Activated CD4-positive, alpha-beta T cell treated with anti-CD3 and anti-CD28 coated beads for 36 hours (primary cell): ENCODE measurements at regions of chr13 and their contacts with region 1.

Region 1: GRCh38 chr13:94210816-94211215 is 268.7 kb downstream of the DCT start:
- DNase-seq: peak; percentile 12
- ATAC-seq: peak; percentile 65
- H3K4me3 Mint-ChIP-seq: no peak overlapping the region
- H3K27ac Mint-ChIP-seq: no peak overlapping the region
- H3K4me1 Mint-ChIP-seq: peaks cover 3% of the 10 kb centered on the region
- H3K27me3 Mint-ChIP-seq: no peaks in the 10 kb centered on the region

Region 2: DNA sequence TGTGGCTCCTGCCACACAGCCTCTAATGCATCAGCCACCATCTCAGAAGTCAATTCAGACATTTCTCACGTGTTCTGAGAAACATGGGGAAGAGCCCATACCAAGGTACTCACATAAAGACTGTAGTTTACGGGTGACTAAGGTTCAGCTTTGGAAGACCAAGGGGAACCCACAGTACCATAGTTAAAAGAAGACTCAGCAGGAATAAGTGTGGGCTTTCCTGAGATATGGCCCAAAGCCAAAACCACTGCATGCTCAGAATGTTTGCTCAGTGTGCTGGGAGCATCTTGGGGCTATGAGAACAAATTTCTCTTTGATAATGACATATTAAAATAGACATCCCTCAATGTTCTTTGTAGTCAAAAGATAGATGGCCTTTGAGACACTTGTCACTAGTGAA is 15.1 kb before region 1 on chr13:
- CTCF ChIA-PET with region 1: no interaction called
- POLR2A ChIA-PET with region 1: no interaction called
- intact Hi-C with region 1: no loop called
- DNase-seq: no peak
- ATAC-seq: no peak
- H3K4me3 Mint-ChIP-seq: no peak overlapping the region
- H3K27ac Mint-ChIP-seq: no peak overlapping the region
- H3K4me1 Mint-ChIP-seq: no peaks in the 10 kb centered on the region
- H3K27me3 Mint-ChIP-seq: no peaks in the 10 kb centered on the region

Region 3: GRCh38 chr13:94233401-94233800 is 22.6 kb after region 1 on chr13:
- CTCF ChIA-PET with region 1: no interaction called
- POLR2A ChIA-PET with region 1: no interaction called
- intact Hi-C with region 1: no loop called
- DNase-seq: no peak
- ATAC-seq: no peak
- H3K4me3 Mint-ChIP-seq: no peak overlapping the region
- H3K27ac Mint-ChIP-seq: no peak overlapping the region
- H3K4me1 Mint-ChIP-seq: peaks cover 23% of the 10 kb centered on the region
- H3K27me3 Mint-ChIP-seq: no peaks in the 10 kb centered on the region

Region 4: GRCh38 chr13:94849254-94849653 is 638.4 kb after region 1 on chr13:
- CTCF ChIA-PET with region 1: no interaction called
- POLR2A ChIA-PET with region 1: interaction called, 11 read pairs
- intact Hi-C with region 1: no loop called
- DNase-seq: no peak
- ATAC-seq: no peak
- H3K4me3 Mint-ChIP-seq: no peak overlapping the region
- H3K27ac Mint-ChIP-seq: no peak overlapping the region
- H3K4me1 Mint-ChIP-seq: no peaks in the 10 kb centered on the region
- H3K27me3 Mint-ChIP-seq: no peaks in the 10 kb centered on the region